Breast epithelium (tissue), 4 donors: ENCODE measurements at regions of chr12 and their contacts with region 1.

Region 1: DNA sequence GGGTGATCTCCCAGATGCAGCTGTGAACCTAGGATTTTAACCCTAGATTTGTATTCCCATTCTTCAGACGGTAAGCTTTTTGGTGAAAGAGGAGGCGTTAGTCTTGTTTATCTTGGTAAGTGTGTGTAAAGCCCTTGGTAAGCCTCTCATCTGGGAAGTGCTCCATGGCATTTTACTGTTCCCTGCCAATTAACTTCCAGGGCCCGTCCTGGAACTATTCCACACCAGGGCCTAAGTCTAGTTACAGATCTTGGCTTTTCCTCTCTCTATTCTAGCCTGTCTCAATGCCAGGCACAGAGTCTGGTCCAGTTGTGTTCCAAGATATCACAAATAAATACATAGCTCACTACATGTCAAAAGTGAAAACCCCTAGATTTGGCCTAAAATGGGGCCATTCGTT is 42.4 kb downstream of the YEATS4 start:
- DNase-seq: no peak
- H3K4me3 ChIP-seq: no peak overlapping the region
- H3K27ac ChIP-seq: no peak overlapping the region
- H3K4me1 ChIP-seq: no peaks in the 10 kb centered on the region
- H3K27me3 ChIP-seq: no peaks in the 10 kb centered on the region
- CTCF ChIP-seq: no peak
- POLR2A ChIP-seq: no peak

Region 2: DNA sequence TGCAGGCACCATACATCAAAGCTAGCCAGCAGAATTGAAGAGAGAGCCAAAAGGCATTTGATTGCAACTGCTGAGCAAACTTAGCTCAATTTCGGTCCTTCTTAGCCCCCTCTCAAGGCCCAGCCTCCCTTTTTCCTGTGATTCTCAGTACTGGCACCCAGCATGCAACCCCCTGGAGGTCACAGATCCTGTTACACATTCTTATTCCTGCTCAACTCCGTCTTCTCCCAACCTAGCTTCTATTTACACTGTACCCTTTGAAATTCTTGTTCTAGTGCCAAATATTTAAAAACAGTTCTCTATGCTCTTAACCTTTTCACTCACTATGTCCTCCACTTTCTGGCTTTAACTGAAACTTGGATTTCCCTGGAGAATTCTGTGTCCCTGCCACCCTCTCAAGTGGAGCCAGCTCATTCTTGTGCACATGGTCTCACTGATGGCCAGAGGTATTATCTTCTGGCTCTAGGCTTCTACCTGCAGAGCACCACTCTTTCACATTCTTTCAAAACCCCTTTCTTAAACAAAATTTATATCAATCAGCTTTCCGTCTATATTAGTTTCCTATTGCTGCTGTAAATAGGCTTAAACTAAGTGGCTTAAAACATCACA is 293.8 kb before region 1 on chr12:
- intact Hi-C with region 1: no loop called
- DNase-seq: no peak
- H3K4me3 ChIP-seq: no peak overlapping the region
- H3K27ac ChIP-seq: peak overlapping the region in 1 of 2 donors; percentile 54
- H3K4me1 ChIP-seq: peaks cover 0 to 4% of the 10 kb centered on the region in 2 donors
- H3K27me3 ChIP-seq: no peaks in the 10 kb centered on the region
- CTCF ChIP-seq: no peak
- POLR2A ChIP-seq: no peak

Region 3: GRCh38 chr12:69428351-69429065 is 26.6 kb after region 1 on chr12:
- intact Hi-C with region 1: loop called (anchors 2 kb)
- DNase-seq: no peak
- H3K4me3 ChIP-seq: no peak overlapping the region
- H3K27ac ChIP-seq: no peak overlapping the region
- H3K4me1 ChIP-seq: no peaks in the 10 kb centered on the region
- H3K27me3 ChIP-seq: no peaks in the 10 kb centered on the region
- CTCF ChIP-seq: no peak
- POLR2A ChIP-seq: no peak